ENCODE measurements at regions of chr12 and their contacts with region 1.

Region 1: GRCh38 chr12:107126796-107127481 is 33.6 kb upstream of the CRY1 start:
- DNase-seq: peak in 1 of 2 experiments; percentile 33
- ATAC-seq: peak; percentile 74 to 78; a peak in 5 of 6 replicates
- H3K4me3 ChIP-seq: no peak overlapping the region
- H3K27ac ChIP-seq: no peak overlapping the region
- H3K4me1 ChIP-seq: 0 out of 3 replicates have a peak, but pooled peaks cover under 1% of the 10 kb centered on the region
- CTCF ChIP-seq: peak; percentile 68
- EP300 ChIP-seq: no peak
- POLR2A ChIP-seq: no peak
- RAD21 ChIP-seq: peak; percentile 77 to 82

Region 2: GRCh38 chr12:107207931-107208525 is 81.1 kb after region 1 on chr12:
- CTCF ChIA-PET with region 1: no interaction called
- POLR2A ChIA-PET with region 1: no interaction called
- DNase-seq: no peak
- ATAC-seq: no peak
- H3K4me3 ChIP-seq: no peak overlapping the region
- H3K27ac ChIP-seq: no peak overlapping the region
- H3K4me1 ChIP-seq: no peaks in the 10 kb centered on the region
- CTCF ChIP-seq: no peak
- EP300 ChIP-seq: no peak
- POLR2A ChIP-seq: no peak
- RAD21 ChIP-seq: no peak

Region 3: DNA sequence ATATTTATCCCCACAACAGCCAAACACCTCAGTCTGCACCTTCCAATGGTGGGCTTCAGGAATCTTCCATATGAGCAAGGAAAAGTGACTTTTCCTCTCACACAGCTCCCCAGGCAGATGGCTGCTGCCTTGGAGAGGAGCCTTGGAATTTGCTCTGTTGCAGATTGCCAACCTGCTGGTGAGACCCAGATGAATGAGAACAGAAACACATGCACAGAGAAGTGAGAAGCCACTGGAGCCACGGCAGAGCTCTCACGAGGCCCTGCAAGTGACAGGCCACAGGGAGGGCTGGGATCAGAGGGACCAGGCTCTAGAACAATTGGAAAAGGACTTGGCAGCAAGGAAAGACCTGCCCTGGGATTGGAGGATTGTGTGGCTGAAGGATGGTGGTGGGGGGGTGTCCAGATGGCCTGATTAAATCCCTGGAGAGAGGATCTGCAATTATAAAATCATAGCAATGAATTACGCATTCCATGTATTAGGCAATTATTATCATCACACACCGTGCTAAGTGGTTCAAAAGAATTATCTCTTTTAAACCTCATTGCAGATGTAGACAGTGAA is 473.7 kb after region 1 on chr12:
- CTCF ChIA-PET with region 1: interaction called, 419 read pairs
- POLR2A ChIA-PET with region 1: no interaction called
- DNase-seq: no peak
- ATAC-seq: no peak
- H3K4me3 ChIP-seq: no peak overlapping the region
- H3K27ac ChIP-seq: no peak overlapping the region
- H3K4me1 ChIP-seq: no peaks in the 10 kb centered on the region
- CTCF ChIP-seq: no peak
- EP300 ChIP-seq: no peak
- POLR2A ChIP-seq: no peak
- RAD21 ChIP-seq: no peak